Right ventricle myocardium inferior (tissue), 1 donor: ENCODE measurements at regions of chr17 and their contacts with region 1.

Region 1: GRCh38 chr17:73657473-73658116 is 13.3 kb upstream of the SDK2 start:
- DNase-seq: peak; percentile 76
- ATAC-seq: peak; percentile 57

Region 2: GRCh38 chr17:73841431-73842060 is 184.0 kb after region 1 on chr17:
- intact Hi-C with region 1: loop called (anchors 5 kb)
- DNase-seq: no peak
- ATAC-seq: no peak

Region 3: GRCh38 chr17:73956669-73957465 is 299.3 kb after region 1 on chr17:
- intact Hi-C with region 1: loop called (anchors 10 kb)
- DNase-seq: no peak
- ATAC-seq: no peak

Region 4: DNA sequence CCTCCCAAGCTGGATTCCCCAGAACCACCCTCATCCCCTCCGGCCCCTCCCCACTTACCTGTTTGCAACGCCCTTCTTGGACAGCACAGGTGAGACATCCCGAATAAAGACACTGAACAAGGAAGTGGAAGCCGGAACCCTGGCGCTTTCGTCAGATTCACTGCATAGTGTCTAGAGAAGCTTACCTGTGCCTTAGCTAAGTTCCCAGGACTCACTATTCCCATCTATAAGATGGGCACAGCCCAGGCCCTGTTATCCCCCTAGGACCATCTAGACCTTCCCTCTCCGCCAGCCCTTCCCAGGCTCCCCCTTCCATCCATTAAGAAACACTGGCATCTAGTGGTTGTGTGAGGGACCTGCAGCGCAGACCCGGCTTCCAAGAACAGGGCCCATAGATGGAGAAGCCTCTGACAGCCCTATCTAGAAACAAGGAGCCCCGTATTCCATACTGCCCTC is 519.0 kb after region 1 on chr17:
- intact Hi-C with region 1: loop called (anchors 5 kb)
- DNase-seq: peak; percentile 78
- ATAC-seq: peak; percentile 77